ENCODE measurements at regions of chr6 and their contacts with region 1.

Region 1: GRCh38 chr6:133241086-133241900 is at the start of gene EYA4:
- DNase-seq: no peak
- H3K4me3 Mint-ChIP-seq: no peak within 1 kb of the TSS
- H3K27ac Mint-ChIP-seq: no peak within 1 kb of the TSS
- H3K4me1 Mint-ChIP-seq: no peaks in the 10 kb centered on the region
- H3K27me3 Mint-ChIP-seq: peaks cover 60% of the 10 kb centered on the region
- total RNA-seq, gene EYA4: not detected in 2 replicates

Region 2: GRCh38 chr6:133854364-133855275 is 613.3 kb after region 1 on chr6:
- intact Hi-C with region 1: loop called (anchors 10 kb)
- DNase-seq: no peak
- H3K4me3 Mint-ChIP-seq: no peak overlapping the region
- H3K27ac Mint-ChIP-seq: no peak overlapping the region
- H3K4me1 Mint-ChIP-seq: peaks cover 4% of the 10 kb centered on the region
- H3K27me3 Mint-ChIP-seq: peaks cover 51% of the 10 kb centered on the region